Naive thymus-derived CD4-positive, alpha-beta T cell (primary cell): ENCODE measurements at regions of chr14 and their contacts with region 1.

Region 1: GRCh38 chr14:89618811-89619551 is 201.9 kb upstream of the FOXN3 start:
- DNase-seq: peak; percentile 64 to 80 (median 77)
- ATAC-seq: peak; percentile 77
- H3K4me3 ChIP-seq: peak overlapping the region; percentile 82
- H3K4me3 Mint-ChIP-seq: peak overlapping the region; percentile 90 to 100 (median 97)
- H3K27ac ChIP-seq: peak overlapping the region; percentile 84
- H3K27ac Mint-ChIP-seq: peak overlapping the region; percentile 93 to 98 (median 97)
- H3K4me1 ChIP-seq: peaks cover 38 to 49% of the 10 kb centered on the region in 2 donors
- H3K4me1 Mint-ChIP-seq: peaks cover 41 to 74% (median 66%) of the 10 kb centered on the region in 7 donors
- H3K27me3 ChIP-seq: no peaks in the 10 kb centered on the region
- H3K27me3 Mint-ChIP-seq: no peaks in the 10 kb centered on the region

Region 2: DNA sequence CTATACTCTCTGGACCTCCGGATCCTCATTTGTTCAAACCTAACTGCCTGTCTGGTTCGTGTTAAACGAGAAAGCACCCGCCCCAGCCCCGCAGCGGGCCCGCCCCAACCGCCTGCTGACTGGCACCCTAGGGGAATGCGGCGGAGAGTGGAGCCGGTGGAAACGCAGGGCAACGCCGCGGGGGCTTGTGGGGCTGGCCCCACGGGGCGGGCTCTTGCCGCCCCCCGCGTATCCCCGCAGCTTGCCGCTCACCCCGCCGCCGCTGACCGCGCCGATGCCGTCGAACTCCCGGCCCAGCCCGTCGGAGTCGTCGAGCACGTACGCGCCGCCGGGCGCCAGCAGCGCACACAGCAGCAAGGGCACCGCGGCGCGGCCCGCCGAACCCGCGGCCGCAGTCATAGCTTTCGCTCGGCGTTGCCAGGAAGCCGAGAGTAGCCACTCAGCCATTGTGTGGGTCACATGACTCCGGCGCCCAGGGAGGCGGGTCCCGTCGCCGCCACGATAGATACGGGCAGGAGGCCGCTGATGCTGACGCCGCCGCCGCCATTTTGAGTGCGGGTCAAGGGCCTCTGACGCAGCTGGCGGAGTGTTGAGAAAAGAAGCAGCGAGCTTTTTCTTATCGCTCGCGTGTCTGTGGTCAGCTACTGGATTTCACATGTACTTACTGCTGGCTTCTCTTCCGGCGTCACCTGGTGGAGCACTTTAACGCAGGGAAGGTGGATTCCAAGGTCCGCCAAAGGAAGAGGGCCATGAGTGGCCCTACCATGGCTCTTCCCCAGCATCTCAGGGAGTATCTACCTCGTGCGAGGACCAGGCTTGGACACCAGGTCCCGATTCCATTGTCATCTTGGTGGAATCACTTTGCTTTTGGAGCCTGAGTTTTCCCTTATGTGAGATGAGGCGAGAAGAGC is 1626.0 kb before region 1 on chr14 and contains the start of gene GALC:
- CTCF ChIA-PET with region 1: no interaction called
- POLR2A ChIA-PET with region 1: no interaction called
- intact Hi-C with region 1: loop called in 1 of 2 experiments (anchors 2 kb)
- DNase-seq: peak; percentile 90 to 93 (median 92)
- ATAC-seq: peak; percentile 88
- H3K4me3 ChIP-seq: peak within 1 kb of the TSS; percentile 62
- H3K4me3 Mint-ChIP-seq: peak within 1 kb of the TSS; percentile 88 to 98 (median 94)
- H3K27ac ChIP-seq: peak within 1 kb of the TSS; percentile 94
- H3K27ac Mint-ChIP-seq: peak within 1 kb of the TSS; percentile 89 to 100 (median 99)
- H3K4me1 ChIP-seq: peaks cover 16 to 39% of the 10 kb centered on the region in 2 donors
- H3K4me1 Mint-ChIP-seq: peaks cover 40 to 74% (median 70%) of the 10 kb centered on the region in 7 donors
- H3K27me3 ChIP-seq: no peaks in the 10 kb centered on the region
- H3K27me3 Mint-ChIP-seq: no peaks in the 10 kb centered on the region
- total RNA-seq, gene GALC: 17.8 to 26.1 (median 22.3) TPM

Region 3: GRCh38 chr14:89430391-89431236 is 188.4 kb before region 1 on chr14:
- CTCF ChIA-PET with region 1: interaction called, 3 read pairs
- POLR2A ChIA-PET with region 1: no interaction called
- intact Hi-C with region 1: loop called (anchors 1 to 5 kb)
- DNase-seq: peak in 7 of 9 donors; percentile 59 to 85 (median 78)
- ATAC-seq: peak; percentile 84
- H3K4me3 ChIP-seq: peak overlapping the region; percentile 56
- H3K4me3 Mint-ChIP-seq: peak overlapping the region; percentile 75 to 88 (median 82)
- H3K27ac ChIP-seq: peak overlapping the region; percentile 68
- H3K27ac Mint-ChIP-seq: peak overlapping the region; percentile 72 to 93 (median 83)
- H3K4me1 ChIP-seq: peaks cover 29 to 30% of the 10 kb centered on the region in 2 donors
- H3K4me1 Mint-ChIP-seq: peaks cover 28 to 77% (median 63%) of the 10 kb centered on the region in 7 donors
- H3K27me3 ChIP-seq: no peaks in the 10 kb centered on the region
- H3K27me3 Mint-ChIP-seq: no peaks in the 10 kb centered on the region

Region 4: GRCh38 chr14:89586258-89587135 is 32.5 kb before region 1 on chr14:
- CTCF ChIA-PET with region 1: no interaction called
- POLR2A ChIA-PET with region 1: interaction called, 4 read pairs
- intact Hi-C with region 1: loop called (anchors 2 kb)
- DNase-seq: peak in 7 of 9 donors; percentile 38 to 67 (median 50)
- ATAC-seq: peak; percentile 81
- H3K4me3 ChIP-seq: no peak overlapping the region
- H3K4me3 Mint-ChIP-seq: peak overlapping the region in 9 of 10 donors; percentile 6 to 67 (median 51)
- H3K27ac ChIP-seq: no peak overlapping the region
- H3K27ac Mint-ChIP-seq: peak overlapping the region; percentile 6 to 88 (median 58)
- H3K4me1 ChIP-seq: peaks cover 4 to 29% of the 10 kb centered on the region in 2 donors
- H3K4me1 Mint-ChIP-seq: peaks cover 45 to 90% (median 84%) of the 10 kb centered on the region in 7 donors
- H3K27me3 ChIP-seq: no peaks in the 10 kb centered on the region
- H3K27me3 Mint-ChIP-seq: no peaks in the 10 kb centered on the region

Region 5: GRCh38 chr14:89641495-89642175 is 22.7 kb after region 1 on chr14:
- CTCF ChIA-PET with region 1: interaction called, 4 read pairs
- POLR2A ChIA-PET with region 1: interaction called, 50 read pairs
- intact Hi-C with region 1: loop called (anchors 1 kb)
- DNase-seq: peak in 6 of 9 donors; percentile 25 to 52 (median 36)
- ATAC-seq: peak; percentile 88
- H3K4me3 ChIP-seq: peak overlapping the region; percentile 42
- H3K4me3 Mint-ChIP-seq: peak overlapping the region; percentile 58 to 87 (median 74)
- H3K27ac ChIP-seq: peak overlapping the region; percentile 81
- H3K27ac Mint-ChIP-seq: peak overlapping the region; percentile 75 to 99 (median 96)
- H3K4me1 ChIP-seq: peaks cover 13 to 45% of the 10 kb centered on the region in 2 donors
- H3K4me1 Mint-ChIP-seq: peaks cover 23 to 74% (median 60%) of the 10 kb centered on the region in 7 donors
- H3K27me3 ChIP-seq: no peaks in the 10 kb centered on the region
- H3K27me3 Mint-ChIP-seq: no peaks in the 10 kb centered on the region

Region 6: DNA sequence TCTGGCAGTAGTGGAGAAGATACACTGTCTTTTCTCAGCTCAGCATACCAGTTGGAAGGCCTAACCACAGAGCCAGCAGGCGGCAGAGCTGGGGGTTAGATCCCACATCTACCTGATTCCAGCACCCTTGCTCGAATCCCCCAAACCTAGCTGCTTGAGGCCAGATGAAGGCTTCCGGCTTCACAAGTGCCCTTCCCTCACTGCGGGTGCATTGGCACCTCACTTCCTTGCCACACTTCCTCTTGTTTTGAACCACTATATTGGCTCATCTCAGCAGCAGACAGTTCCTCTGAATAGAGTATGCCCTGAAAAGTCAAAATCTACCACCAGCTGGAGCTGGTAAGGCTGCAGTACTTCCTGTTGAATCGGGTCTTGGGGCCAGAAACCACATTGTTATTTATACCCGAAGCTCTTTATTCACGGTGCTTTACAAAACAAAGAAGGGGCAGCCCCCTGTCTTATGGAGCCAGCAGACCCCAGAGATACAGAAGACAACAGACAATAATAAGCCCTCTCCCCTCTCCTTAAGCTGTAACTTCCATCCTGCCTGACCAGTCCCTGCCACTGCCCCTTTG is 101.8 kb after region 1 on chr14:
- CTCF ChIA-PET with region 1: interaction called, 7 read pairs
- POLR2A ChIA-PET with region 1: interaction called, 68 read pairs
- intact Hi-C with region 1: loop called (anchors 1 kb)
- DNase-seq: peak; percentile 43 to 91 (median 88)
- ATAC-seq: peak; percentile 96
- H3K4me3 ChIP-seq: peak overlapping the region; percentile 43
- H3K4me3 Mint-ChIP-seq: peak overlapping the region; percentile 65 to 81 (median 73)
- H3K27ac ChIP-seq: peak overlapping the region; percentile 70
- H3K27ac Mint-ChIP-seq: peak overlapping the region; percentile 94 to 99 (median 98)
- H3K4me1 ChIP-seq: peaks cover 76 to 78% of the 10 kb centered on the region in 2 donors
- H3K4me1 Mint-ChIP-seq: peaks cover 68 to 99% (median 92%) of the 10 kb centered on the region in 7 donors
- H3K27me3 ChIP-seq: no peaks in the 10 kb centered on the region
- H3K27me3 Mint-ChIP-seq: no peaks in the 10 kb centered on the region

Region 7: DNA sequence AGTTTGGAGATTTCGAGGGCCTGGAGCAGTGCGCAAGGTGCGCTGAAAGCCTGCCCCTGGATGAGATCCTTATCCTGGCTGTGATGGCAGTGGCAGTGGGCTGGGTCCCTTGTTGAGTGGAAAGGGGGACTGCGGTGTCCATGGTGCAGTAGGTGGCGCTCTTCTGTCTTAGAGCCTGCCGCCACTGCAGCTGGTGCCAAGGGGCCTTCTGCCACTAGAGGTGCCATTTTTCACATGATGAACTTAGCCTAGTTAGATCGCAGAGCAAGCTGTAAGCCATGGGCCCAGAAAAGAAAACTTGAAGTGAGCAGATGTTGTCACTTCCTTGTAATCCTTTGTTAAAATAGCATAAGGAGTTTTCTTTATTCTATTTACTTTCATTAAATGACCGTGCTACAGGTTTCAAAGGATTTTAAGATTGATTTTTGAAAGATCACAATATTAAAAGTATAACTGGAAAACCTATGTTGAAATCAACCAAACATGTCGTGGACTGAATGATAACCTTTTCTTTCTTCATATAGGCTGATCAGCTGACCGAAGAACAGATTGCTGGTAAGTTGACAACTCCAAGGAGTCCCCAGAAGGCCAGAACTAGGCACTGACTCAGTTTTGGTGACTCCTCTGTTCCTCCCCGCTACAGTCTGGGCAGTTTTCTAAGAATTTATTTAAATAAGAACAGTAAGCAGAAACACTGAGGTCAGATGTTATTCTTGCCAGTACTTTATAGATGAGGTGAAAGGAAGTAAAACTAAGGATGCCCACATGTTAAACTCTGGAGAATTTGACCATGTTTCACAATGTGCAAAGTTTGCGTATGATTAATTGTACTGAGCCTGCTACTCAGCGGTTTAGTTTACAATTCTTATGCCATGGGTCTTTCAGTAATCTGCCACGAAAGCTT is 780.8 kb after region 1 on chr14:
- CTCF ChIA-PET with region 1: no interaction called
- POLR2A ChIA-PET with region 1: no interaction called
- intact Hi-C with region 1: loop called in 1 of 2 experiments (anchors 5 kb)
- DNase-seq: peak; percentile 60 to 89 (median 85)
- ATAC-seq: peak; percentile 69
- H3K4me3 ChIP-seq: peak overlapping the region; percentile 78
- H3K4me3 Mint-ChIP-seq: peak overlapping the region; percentile 91 to 100 (median 98)
- H3K27ac ChIP-seq: peak overlapping the region; percentile 92
- H3K27ac Mint-ChIP-seq: peak overlapping the region; percentile 38 to 100 (median 99)
- H3K4me1 ChIP-seq: peaks cover 49 to 50% of the 10 kb centered on the region in 2 donors
- H3K4me1 Mint-ChIP-seq: peaks cover 45 to 70% (median 62%) of the 10 kb centered on the region in 7 donors
- H3K27me3 ChIP-seq: no peaks in the 10 kb centered on the region
- H3K27me3 Mint-ChIP-seq: peaks cover 0 to 7% (median 0%) of the 10 kb centered on the region in 5 donors